ENCODE measurements at regions of chr9 and their contacts with region 1.

Region 1: GRCh38 chr9:73132034-73132776 is 19.5 kb upstream of the ANXA1 start:
- DNase-seq: peak; percentile 17
- ATAC-seq: peak; percentile 91
- H3K4me3 Mint-ChIP-seq: peak overlapping the region; percentile 81
- H3K27ac Mint-ChIP-seq: peak overlapping the region; percentile 73
- H3K4me1 Mint-ChIP-seq: peaks cover 12% of the 10 kb centered on the region
- H3K27me3 Mint-ChIP-seq: no peaks in the 10 kb centered on the region
- CTCF ChIP-seq: no peak

Region 2: DNA sequence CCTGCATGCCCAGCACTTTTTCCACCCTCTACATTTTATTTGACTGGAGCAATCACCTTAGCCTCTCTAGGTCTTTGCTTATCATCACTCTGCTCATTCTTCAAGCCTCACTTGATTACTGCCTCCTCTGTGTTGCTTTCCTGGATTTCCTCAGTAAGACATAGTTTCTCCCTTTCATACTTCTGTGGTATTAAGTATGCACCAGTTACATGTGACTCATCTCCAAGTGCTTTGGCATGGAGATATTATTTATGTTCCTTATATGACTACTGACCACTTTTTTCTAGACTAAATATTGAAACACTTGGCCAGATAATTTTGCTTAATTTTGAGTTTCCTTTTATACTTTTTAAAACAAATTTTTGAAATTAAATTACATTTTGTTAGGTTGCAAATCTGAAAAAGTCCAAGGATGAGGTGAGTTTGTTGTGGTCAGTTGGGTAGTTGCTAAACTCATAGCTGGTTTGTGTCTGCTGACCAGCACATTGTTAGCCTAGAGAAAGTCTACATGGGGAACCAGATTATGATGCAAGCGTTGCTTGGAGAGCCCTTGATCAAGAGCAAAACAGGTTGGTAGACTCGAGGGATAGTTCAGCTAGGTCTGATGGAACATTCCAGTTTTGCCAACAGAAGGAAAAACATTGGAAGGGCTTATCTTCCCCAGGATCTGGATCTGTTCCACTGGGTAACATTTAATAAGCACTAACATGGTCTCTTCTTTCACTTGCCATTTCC is 470.6 kb before region 1 on chr9:
- CTCF ChIA-PET with region 1: no interaction called
- POLR2A ChIA-PET with region 1: no interaction called
- intact Hi-C with region 1: no loop called
- DNase-seq: no peak
- ATAC-seq: no peak
- H3K4me3 Mint-ChIP-seq: no peak overlapping the region
- H3K27ac Mint-ChIP-seq: no peak overlapping the region
- H3K4me1 Mint-ChIP-seq: no peaks in the 10 kb centered on the region
- H3K27me3 Mint-ChIP-seq: peaks cover 2% of the 10 kb centered on the region
- CTCF ChIP-seq: no peak

Region 3: DNA sequence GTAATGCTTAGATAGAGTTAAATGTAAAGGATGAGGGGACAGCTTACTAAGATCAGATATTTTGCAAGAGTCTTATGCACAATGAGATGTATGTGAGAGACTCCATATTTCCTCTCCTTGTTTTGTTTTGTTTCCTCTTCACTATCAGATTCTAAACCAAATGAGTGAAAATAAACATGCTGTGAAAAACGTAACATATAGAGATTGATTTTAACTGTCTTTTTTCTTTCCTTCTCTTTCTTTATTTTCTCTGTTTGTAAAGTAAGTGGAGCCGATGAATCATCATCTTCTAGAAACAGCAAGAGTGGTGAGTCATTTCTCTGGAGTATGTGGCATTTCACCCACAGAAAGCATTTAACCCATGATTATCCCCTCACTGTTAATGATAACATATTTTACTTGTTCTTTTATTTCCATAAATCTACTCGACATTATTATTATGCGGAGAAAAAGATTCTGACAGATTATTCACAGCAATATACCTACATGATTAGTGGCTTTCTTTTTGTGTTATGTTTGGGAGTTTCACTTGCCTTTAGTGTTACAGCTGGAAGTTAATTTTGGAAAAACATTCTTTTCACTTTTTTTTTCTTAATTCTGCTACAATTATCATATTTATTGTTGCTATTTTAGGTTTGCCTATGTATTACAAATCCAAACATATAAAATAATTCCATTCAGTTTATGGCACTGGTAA is 17.3 kb after region 1 on chr9:
- CTCF ChIA-PET with region 1: no interaction called
- POLR2A ChIA-PET with region 1: no interaction called
- intact Hi-C with region 1: loop called (anchors 1 kb)
- DNase-seq: no peak
- ATAC-seq: peak; percentile 76
- H3K4me3 Mint-ChIP-seq: peak overlapping the region; percentile 13
- H3K27ac Mint-ChIP-seq: peak overlapping the region; percentile 32
- H3K4me1 Mint-ChIP-seq: peaks cover 20% of the 10 kb centered on the region
- H3K27me3 Mint-ChIP-seq: peaks cover 3% of the 10 kb centered on the region
- CTCF ChIP-seq: no peak